ENCODE measurements at regions of chr6 and their contacts with region 1.

Region 1: GRCh38 chr6:85460921-85461797 is 11.3 kb downstream of the NT5E start:
- DNase-seq: peak; percentile 61
- H3K4me3 ChIP-seq: peak overlapping the region in 1 of 3 experiments; percentile 8
- H3K27ac ChIP-seq: peak overlapping the region; percentile 100
- H3K4me1 ChIP-seq: peaks cover 90% of the 10 kb centered on the region
- H3K27me3 ChIP-seq: no peaks in the 10 kb centered on the region
- CTCF ChIP-seq: no peak
- POLR2A ChIP-seq: no peak

Region 2: GRCh38 chr6:84645000-84645399 is 816.2 kb before region 1 on chr6:
- CTCF ChIA-PET with region 1: no interaction called
- POLR2A ChIA-PET with region 1: no interaction called
- dilution Hi-C with region 1: no loop called
- intact Hi-C with region 1: loop called (anchors 10 kb)
- DNase-seq: peak; percentile 87
- H3K4me3 ChIP-seq: peak overlapping the region in 1 of 3 experiments; percentile 57
- H3K27ac ChIP-seq: peak overlapping the region; percentile 97
- H3K4me1 ChIP-seq: peaks cover 54% of the 10 kb centered on the region
- H3K27me3 ChIP-seq: no peaks in the 10 kb centered on the region
- CTCF ChIP-seq: no peak
- POLR2A ChIP-seq: no peak

Region 3: GRCh38 chr6:85250586-85251220 is 210.5 kb before region 1 on chr6:
- CTCF ChIA-PET with region 1: no interaction called
- POLR2A ChIA-PET with region 1: no interaction called
- dilution Hi-C with region 1: no loop called
- intact Hi-C with region 1: no loop called
- DNase-seq: peak; percentile 73
- H3K4me3 ChIP-seq: no peak overlapping the region
- H3K27ac ChIP-seq: no peak overlapping the region
- H3K4me1 ChIP-seq: no peaks in the 10 kb centered on the region
- H3K27me3 ChIP-seq: peaks cover 0 to 2% of the 10 kb centered on the region in 2 experiments
- CTCF ChIP-seq: no peak
- POLR2A ChIP-seq: no peak

Region 4: DNA sequence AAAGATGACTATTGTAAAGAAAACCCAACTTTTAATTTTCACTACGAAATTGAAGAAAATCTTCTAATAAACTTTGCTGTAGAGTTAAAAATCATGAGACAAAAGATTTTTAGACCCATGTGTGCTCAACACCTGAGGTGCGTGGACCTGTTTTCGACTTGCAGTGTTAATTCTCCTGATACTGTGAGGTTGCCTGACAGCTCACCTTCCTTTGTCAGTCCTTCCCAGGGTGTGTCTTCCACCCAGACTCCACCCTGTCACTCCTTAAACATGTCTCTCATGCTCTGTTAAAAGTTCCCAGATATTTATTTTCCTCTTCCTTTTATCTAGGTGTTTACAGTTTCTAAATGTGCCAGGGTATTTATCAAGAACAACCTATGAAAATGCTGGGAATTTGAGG is 162.6 kb before region 1 on chr6:
- CTCF ChIA-PET with region 1: no interaction called
- POLR2A ChIA-PET with region 1: no interaction called
- dilution Hi-C with region 1: no loop called
- intact Hi-C with region 1: no loop called
- DNase-seq: no peak
- H3K4me3 ChIP-seq: no peak overlapping the region
- H3K27ac ChIP-seq: no peak overlapping the region
- H3K4me1 ChIP-seq: no peaks in the 10 kb centered on the region
- H3K27me3 ChIP-seq: peaks cover 2 to 6% of the 10 kb centered on the region in 2 experiments
- CTCF ChIP-seq: no peak
- POLR2A ChIP-seq: no peak

Region 5: DNA sequence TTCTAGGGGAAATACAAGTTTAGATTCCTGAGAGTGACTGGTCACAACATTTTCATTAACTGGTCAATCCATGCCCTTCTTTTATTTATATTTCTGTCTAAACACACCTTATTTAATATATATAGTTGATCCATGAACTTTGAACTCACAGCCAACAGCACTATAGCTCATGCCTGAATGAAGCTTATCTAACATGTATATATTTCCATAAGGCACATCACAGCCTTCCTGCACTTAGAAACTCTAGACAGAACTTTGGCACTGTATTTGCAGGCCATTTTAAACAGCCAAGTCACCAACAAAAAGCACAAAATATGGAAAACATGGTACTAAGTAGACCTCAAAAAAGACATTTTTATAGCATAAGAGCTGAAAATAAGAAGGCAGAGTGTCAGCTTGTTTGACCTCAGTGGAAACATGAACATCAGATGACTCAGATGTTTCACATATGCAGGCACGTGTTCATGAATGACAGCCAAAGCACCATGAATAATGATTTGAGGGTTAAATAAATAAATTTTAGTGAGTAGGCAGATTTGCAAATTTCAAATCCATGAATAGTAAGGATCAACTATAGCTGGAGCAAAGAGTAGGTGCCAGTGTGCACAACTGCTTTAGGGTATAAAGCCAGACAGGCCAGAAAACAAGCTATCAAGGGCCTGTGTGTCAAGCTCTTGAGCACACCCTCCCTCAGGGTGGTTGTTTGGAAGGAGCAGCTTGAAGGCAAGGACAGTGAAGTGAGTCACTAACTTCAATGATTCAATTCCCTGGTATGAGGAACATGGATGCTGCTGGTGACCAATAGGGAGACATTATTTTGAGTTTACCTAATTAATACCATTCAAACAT is 100.1 kb before region 1 on chr6:
- CTCF ChIA-PET with region 1: interaction called, 12 read pairs
- POLR2A ChIA-PET with region 1: interaction called, 7 read pairs
- dilution Hi-C with region 1: loop called (anchors 25 kb)
- intact Hi-C with region 1: no loop called
- DNase-seq: peak; percentile 70
- H3K4me3 ChIP-seq: no peak overlapping the region
- H3K27ac ChIP-seq: peak overlapping the region; percentile 70
- H3K4me1 ChIP-seq: peaks cover 30% of the 10 kb centered on the region
- H3K27me3 ChIP-seq: no peaks in the 10 kb centered on the region
- CTCF ChIP-seq: no peak
- POLR2A ChIP-seq: no peak

Region 6: GRCh38 chr6:85449818-85450759 is 11.1 kb before region 1 on chr6 and contains the start of gene NT5E:
- CTCF ChIA-PET with region 1: interaction called, 53 read pairs
- POLR2A ChIA-PET with region 1: interaction called, 34 read pairs
- dilution Hi-C with region 1: no loop called
- intact Hi-C with region 1: loop called (anchors 1 kb)
- DNase-seq: peak; percentile 79
- H3K4me3 ChIP-seq: peak within 1 kb of the TSS; percentile 61 to 86 (median 69)
- H3K27ac ChIP-seq: peak within 1 kb of the TSS; percentile 84
- H3K4me1 ChIP-seq: peaks cover 23% of the 10 kb centered on the region
- H3K27me3 ChIP-seq: no peaks in the 10 kb centered on the region
- CTCF ChIP-seq: peak in 1 of 2 donors; percentile 1
- POLR2A ChIP-seq: peak; percentile 72
- total RNA-seq, gene NT5E: 48.2 and 115 TPM in 2 replicates

Region 7: DNA sequence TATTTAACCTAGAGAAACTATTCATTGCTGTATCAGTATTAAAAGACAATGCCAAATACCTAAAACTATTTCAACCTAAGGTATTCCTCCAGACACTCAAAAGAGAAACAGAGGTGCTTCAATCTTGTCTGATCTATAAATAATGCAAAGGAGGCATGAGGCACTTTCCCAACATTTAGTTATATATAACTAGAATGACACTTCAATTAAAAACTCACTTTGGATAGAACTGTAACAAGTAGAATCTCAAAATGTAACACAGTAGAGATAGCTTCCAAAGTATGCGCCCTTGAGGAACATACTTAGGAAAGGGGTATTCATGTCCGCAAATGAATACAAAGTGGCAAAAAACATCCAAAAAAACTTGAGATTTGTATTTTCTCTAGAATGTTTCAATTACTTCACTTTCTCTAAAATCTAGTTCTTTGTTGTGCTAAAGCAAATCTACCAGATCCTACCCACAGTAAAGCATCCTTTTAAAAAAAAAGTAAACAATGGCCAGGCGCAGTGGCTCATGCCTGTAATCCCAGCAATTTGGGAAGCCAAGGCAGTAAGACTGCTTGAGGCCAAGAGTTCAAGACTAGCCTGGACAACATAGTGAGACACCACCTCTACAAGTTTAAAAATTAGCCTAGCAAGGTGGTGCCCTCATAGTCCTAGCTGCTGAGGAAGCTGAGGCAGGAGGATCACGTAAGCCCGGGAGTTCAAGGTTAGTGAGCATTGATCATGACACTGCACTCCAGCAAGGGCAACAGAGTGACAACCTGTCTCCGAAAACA is 171.2 kb after region 1 on chr6:
- CTCF ChIA-PET with region 1: no interaction called
- POLR2A ChIA-PET with region 1: no interaction called
- dilution Hi-C with region 1: no loop called
- intact Hi-C with region 1: no loop called
- DNase-seq: no peak
- H3K4me3 ChIP-seq: no peak overlapping the region
- H3K27ac ChIP-seq: no peak overlapping the region
- H3K4me1 ChIP-seq: no peaks in the 10 kb centered on the region
- H3K27me3 ChIP-seq: no peaks in the 10 kb centered on the region
- CTCF ChIP-seq: no peak
- POLR2A ChIP-seq: no peak

Region 8: GRCh38 chr6:85642774-85643536 is 181.8 kb after region 1 on chr6 and contains the start of gene SYNCRIP:
- CTCF ChIA-PET with region 1: no interaction called
- POLR2A ChIA-PET with region 1: no interaction called
- dilution Hi-C with region 1: no loop called
- intact Hi-C with region 1: loop called (anchors 1 kb)
- DNase-seq: peak; percentile 99
- H3K4me3 ChIP-seq: peak within 1 kb of the TSS; percentile 87 to 91 (median 90)
- H3K27ac ChIP-seq: peak within 1 kb of the TSS; percentile 100
- H3K4me1 ChIP-seq: peaks cover 27% of the 10 kb centered on the region
- H3K27me3 ChIP-seq: no peaks in the 10 kb centered on the region
- CTCF ChIP-seq: no peak
- POLR2A ChIP-seq: peak; percentile 97
- total RNA-seq, gene SYNCRIP: 150 and 155 TPM in 2 replicates